ENCODE measurements at regions of chr14 and their contacts with region 1.

Region 1: DNA sequence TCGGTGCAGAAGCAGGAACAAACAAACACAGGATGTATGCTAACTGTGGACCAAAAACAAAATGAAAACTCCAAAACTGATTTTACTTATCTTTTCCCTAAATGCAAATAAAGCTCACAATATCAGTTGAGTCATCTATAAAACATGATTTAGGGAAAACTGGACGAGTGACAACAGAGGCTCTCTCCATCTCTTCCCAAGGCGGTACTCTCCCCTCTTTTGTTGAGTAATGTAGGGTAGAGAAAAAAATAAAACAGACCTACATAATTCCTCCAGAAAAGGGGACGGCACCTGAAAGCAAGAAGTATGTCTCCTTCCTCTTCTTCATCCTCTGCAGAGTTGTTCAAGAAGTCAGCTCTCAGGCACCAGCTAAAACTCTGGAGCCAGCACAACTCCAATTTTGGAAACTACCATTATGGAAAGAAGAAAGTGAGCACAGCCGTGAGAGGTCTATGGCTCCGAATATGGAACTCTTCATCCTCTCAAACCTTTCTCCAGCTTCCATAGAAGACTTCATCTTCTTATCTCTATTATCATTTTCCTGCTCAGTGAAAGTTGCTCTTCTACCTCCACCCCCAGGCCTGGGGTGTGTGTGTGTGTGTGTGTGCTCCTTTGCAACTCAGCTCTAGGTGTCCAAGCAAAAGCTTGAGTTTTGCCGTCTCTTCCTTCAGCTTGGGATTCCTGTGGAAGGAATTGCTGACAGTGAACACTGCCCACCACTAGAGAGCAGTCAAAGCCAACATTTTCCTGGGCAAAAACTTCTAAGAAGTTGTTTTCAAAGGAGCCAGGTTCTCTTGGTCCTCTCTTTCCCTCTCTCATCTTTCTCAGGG is 155.4 kb downstream of the DIO2 start:
- DNase-seq: peak; percentile 19
- ATAC-seq: peak; percentile 54 to 72

Region 2: GRCh38 chr14:80233470-80233869 is 177.6 kb after region 1 on chr14:
- intact Hi-C with region 1: no loop called
- DNase-seq: no peak
- ATAC-seq: no peak

Region 3: GRCh38 chr14:80587075-80587724 is 531.3 kb after region 1 on chr14:
- intact Hi-C with region 1: loop called in 1 of 2 experiments (anchors 5 kb)
- DNase-seq: no peak
- ATAC-seq: no peak

Region 4: DNA sequence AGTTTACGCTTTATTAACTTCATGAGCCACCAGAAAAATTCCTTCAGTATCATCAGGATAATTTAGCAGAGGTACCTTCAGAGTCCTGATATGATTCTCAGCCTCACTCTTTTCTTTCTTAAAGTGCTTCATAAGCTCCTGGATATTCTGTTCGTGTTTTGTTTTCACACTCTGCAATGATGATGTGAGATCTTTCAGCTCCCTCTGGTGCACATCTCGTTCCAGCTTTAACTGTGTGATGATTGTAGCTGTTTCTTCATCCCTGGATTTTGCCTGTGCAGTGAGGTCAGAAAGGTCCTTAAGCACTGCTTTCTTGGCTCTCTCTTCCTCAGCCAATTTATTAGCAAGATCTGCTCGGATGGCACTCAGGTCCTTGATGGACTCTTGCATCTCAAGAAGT is 728.9 kb after region 1 on chr14:
- intact Hi-C with region 1: loop called in 1 of 2 experiments (anchors 5 kb)
- DNase-seq: no peak
- ATAC-seq: no peak